Posterior cingulate gyrus (tissue), 11 donors: ENCODE measurements at regions of chr13 and their contacts with region 1.

Region 1: DNA sequence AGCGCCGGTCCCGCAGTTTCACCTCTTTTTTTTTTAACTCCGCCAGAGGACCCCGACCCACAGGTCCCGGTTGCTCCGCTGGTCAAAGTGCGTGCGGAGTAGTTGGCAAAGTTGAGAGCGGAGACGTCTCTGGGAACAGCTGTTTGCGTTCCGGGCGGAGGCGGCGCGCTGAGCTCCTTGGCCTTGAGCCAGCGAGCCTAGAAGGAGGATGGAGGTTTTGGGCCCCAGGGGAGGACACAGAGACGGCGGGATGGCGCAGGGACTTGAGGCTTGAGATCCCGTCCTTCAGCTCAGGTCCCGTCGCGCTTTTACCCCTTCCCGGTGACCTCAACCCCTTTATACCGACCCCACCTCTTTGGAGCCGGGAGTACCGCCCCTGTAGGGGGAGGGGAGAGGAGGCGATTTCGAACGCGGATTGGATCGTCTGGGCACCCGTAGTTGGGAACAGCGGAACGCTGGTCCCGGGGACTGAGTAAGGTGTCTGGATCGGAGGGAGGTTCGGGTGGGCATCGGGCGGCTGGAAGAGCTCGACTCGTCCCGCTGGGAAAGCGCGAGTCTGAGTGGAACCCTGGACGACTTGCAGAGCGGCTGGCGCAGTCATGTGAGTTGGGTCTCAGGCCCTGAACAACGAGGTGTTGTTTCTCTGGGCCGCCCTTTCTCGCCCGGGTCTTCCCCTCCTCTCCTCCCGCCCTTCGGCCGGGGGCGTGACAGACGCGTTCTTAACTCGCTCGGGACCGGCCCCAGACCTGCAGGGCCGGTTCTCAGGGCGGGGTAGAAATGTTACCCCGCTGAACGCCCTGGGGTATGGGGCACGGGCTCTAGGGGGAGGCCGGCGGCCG is at the start of gene WBP4:
- DNase-seq: peak; percentile 86 to 98 (median 91)

Region 2: GRCh38 chr13:40922437-40923040 is 138.8 kb before region 1 on chr13:
- intact Hi-C with region 1: loop called (anchors 5 kb)
- DNase-seq: no peak

Region 3: GRCh38 chr13:40984668-40985366 is 76.5 kb before region 1 on chr13:
- intact Hi-C with region 1: loop called (anchors 5 kb)
- DNase-seq: no peak

Region 4: DNA sequence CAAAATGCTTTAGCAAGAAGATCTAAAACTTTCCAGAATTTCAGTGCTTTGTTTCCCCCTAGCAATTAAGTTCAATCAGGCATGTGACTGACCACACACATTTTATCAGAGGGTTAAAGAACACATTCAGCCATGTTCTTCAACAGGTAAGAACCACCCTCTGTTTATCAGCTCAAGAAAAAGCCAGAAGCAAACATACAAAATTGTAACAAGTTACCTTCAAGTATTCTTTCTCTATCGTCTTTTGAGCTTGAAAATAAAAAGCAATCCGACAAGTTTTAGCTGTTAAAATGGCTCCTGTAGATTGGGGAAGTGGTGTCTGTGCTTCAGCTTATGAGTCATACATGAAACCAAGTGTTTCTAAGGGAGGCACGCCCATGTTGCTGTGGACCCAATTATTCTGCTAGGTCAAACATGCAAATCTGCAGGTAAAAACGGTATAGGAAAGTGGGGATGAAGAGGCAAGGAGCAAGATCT is 42.2 kb before region 1 on chr13 and contains the start of gene ELF1:
- intact Hi-C with region 1: loop called (anchors 5 kb)
- DNase-seq: no peak

Region 5: GRCh38 chr13:41111454-41111853 is 50.2 kb after region 1 on chr13:
- intact Hi-C with region 1: no loop called
- DNase-seq: no peak

Region 6: GRCh38 chr13:41193919-41194824 is 132.9 kb after region 1 on chr13 and contains the start of gene KBTBD7:
- intact Hi-C with region 1: loop called (anchors 10 kb)
- DNase-seq: peak; percentile 91 to 99 (median 96)

Region 7: GRCh38 chr13:41588899-41589298 is 527.6 kb after region 1 on chr13:
- intact Hi-C with region 1: no loop called
- DNase-seq: no peak

Region 8: DNA sequence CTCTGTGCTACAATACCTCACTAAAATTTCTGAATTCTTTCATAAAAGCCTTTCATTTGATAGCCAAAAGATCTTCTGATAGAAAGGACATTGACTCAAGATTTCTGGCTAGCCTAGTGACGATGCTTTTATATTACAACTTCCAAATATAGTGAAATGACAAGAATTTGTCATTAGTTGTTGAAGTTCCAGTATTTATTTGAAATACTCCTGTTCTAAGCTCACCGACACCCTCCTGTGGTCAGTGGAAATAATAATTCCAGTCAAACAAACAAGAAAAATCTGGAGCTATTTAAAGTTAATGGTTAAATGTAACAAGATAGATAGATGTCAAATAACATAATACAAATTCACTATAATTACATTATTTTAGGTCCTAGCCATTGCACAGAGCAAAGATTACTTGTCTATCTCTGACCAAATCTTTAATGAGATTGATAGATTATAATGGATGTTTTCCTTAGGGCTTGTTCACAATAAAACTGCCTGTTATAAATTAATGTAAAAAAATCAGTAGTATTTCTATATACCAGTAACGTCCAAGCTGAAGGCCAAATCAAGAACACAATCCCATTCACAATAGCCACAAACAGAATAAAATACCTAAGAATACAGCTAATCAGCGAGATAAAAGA is 591.5 kb after region 1 on chr13:
- intact Hi-C with region 1: no loop called
- DNase-seq: peak in 1 of 10 donors; percentile 50

Region 9: GRCh38 chr13:41973247-41973741 is 912.0 kb after region 1 on chr13:
- intact Hi-C with region 1: no loop called
- DNase-seq: peak in 1 of 10 donors; percentile 54